ENCODE measurements at regions of chr2 and their contacts with region 1.

Region 1: GRCh38 chr2:95392730-95393455 is 9.6 kb upstream of the FAHD2A start:
- DNase-seq: no peak
- H3K4me3 ChIP-seq: no peak overlapping the region
- H3K27ac ChIP-seq: no peak overlapping the region
- H3K4me1 ChIP-seq: no peaks in the 10 kb centered on the region
- CTCF ChIP-seq: peak; percentile 38; the same call in 1 of the 2 replicates

Region 2: DNA sequence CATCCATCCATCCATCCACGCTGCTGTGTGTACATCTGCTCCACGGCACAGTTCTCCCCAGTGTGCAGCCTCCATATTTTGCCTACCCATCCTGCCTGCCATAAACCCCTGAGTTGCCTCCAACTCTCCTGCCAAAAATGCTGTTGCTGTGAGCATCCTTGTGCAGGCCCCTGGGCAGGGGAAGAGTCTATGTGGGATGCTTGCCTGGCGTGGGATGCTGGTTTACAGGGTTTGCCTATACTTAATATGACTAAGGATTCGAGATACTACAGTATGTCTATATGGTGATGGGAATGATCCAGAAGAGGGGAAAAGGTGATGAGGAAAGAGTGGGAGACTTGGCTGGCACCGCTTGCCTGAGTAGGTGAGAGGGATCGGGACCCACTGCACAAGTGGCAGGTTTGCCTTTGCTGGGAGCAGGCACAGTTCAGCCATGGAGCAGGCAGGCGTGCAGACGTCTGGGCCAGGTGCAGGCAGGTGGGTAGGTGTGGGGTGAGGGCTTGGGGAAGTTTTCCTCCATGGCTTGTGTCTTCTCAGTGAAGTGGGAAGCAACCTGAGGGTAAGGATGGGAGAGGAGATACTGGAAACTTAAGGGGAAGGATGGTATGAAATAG is 20.6 kb before region 1 on chr2:
- CTCF ChIA-PET with region 1: no interaction called
- POLR2A ChIA-PET with region 1: no interaction called
- intact Hi-C with region 1: loop called (anchors 2 kb)
- DNase-seq: no peak
- H3K4me3 ChIP-seq: no peak overlapping the region
- H3K27ac ChIP-seq: no peak overlapping the region
- H3K4me1 ChIP-seq: no peaks in the 10 kb centered on the region
- CTCF ChIP-seq: no peak

Measured in OCI-LY7 (cell line).